H1 (cell line): ENCODE measurements at regions of chr1 and their contacts with region 1.

Region 1: GRCh38 chr1:28845786-28846543 is 34.0 kb downstream of the OPRD1 start:
- DNase-seq: no peak
- H3K4me3 ChIP-seq: no peak overlapping the region
- H3K27ac ChIP-seq: peak overlapping the region; percentile 11; the same call in 1 of the 2 replicates
- H3K4me1 ChIP-seq: no peaks in the 10 kb centered on the region; a peak in 1 of 7 replicates
- H3K27me3 ChIP-seq: no peaks in the 10 kb centered on the region
- CTCF ChIP-seq: peak; percentile 42 to 46 (median 43)
- EP300 ChIP-seq: no peak
- POLR2A ChIP-seq: no peak
- RAD21 ChIP-seq: peak; percentile 46 to 51

Region 2: DNA sequence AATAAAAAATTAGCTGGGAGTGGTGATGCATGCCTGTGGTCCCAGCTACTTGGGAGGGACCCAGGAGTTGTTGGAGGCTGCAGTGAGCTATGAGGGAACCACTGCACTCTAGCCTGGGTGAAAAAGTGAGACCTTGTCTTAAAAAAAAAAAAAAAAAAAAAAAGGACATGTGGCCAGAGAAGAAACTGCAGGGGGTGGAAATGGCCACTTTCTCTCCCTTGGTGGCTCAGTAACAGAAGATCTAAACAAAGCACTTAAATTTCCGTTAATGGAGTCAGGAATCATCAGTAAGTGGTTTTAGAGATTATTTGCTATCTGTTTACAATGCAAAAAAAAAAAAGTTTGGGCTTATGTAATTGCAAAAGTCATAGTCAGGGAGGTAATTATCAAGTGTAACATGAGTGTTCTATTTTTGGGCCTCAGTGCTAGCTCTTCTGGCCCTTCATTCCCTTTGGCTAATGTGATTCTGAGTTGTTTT is 53.3 kb before region 1 on chr1:
- CTCF ChIA-PET with region 1: interaction called, 12 read pairs
- POLR2A ChIA-PET with region 1: no interaction called
- DNase-seq: no peak
- H3K4me3 ChIP-seq: no peak overlapping the region
- H3K27ac ChIP-seq: no peak overlapping the region
- H3K4me1 ChIP-seq: peaks cover 0 to 8% (median 2%) of the 10 kb centered on the region in 4 experiments; a peak in 2 of 7 replicates
- H3K27me3 ChIP-seq: no peaks in the 10 kb centered on the region
- CTCF ChIP-seq: no peak
- EP300 ChIP-seq: no peak
- POLR2A ChIP-seq: no peak
- RAD21 ChIP-seq: no peak

Region 3: DNA sequence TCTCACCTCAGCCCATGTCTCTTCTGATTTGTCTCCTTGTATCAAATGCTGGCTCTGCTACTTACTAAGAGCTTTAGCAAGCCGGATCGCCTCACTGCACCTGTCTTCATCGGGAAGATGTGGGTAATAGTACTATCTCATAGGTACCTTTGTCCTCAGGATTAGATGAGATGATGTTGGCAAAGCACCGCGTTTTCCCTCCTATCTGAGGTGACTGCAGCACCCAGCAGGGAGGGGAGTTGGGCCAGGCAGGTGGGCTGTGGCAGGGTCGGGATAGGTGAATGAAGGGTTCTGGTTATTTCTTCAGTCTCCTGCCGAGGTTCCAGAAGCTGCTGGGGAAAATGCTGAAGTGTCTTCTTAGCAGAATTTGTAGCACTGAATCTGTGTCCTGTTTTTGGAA is 28.8 kb before region 1 on chr1:
- CTCF ChIA-PET with region 1: interaction called, 10 read pairs
- POLR2A ChIA-PET with region 1: interaction called, 3 read pairs
- DNase-seq: no peak
- H3K4me3 ChIP-seq: no peak overlapping the region
- H3K27ac ChIP-seq: no peak overlapping the region
- H3K4me1 ChIP-seq: peaks cover 0 to 14% (median 5%) of the 10 kb centered on the region in 4 experiments; a peak in 4 of 7 replicates
- H3K27me3 ChIP-seq: peaks cover 11 to 23% (median 18%) of the 10 kb centered on the region in 4 experiments
- CTCF ChIP-seq: no peak
- EP300 ChIP-seq: no peak
- POLR2A ChIP-seq: no peak
- RAD21 ChIP-seq: no peak